GM10248 (cell line): ENCODE measurements at regions of chr4 and their contacts with region 1.

Region 1: DNA sequence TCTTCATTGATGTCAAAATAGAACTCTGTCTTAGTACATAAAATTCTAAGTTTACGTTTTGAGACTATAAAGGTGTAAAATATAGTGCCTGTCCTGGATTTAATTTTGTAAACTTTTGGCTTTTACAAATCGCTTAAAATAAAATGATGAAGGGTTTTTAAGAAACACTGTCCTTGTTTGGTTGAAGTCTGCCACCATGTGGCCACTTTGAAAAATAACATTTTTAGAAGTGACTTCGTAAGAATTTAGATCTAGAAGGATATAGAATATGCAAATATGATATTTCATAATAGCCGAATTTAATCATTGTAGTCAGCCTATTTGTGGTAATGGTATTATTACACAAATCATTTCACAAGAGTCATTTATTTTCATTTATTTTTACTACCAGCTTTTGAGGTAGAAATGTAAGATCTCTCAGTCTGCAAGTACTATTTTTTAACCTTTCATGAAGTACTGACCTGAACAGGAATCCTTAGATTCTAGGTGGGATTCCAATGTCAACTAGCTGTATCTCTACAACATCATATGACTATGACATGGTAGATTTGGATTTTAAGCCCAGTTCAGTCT is 31.0 kb upstream of the FAT4 start:
- DNase-seq: peak; percentile 24
- CTCF ChIP-seq: peak; percentile 36

Region 2: GRCh38 chr4:124334119-124334518 is 949.7 kb before region 1 on chr4:
- CTCF ChIA-PET with region 1: interaction called, 33 read pairs
- POLR2A ChIA-PET with region 1: no interaction called
- DNase-seq: no peak
- CTCF ChIP-seq: peak; percentile 39

Region 3: GRCh38 chr4:125266901-125267604 is 16.7 kb before region 1 on chr4:
- CTCF ChIA-PET with region 1: interaction called, 18 read pairs
- POLR2A ChIA-PET with region 1: no interaction called
- DNase-seq: no peak
- CTCF ChIP-seq: no peak

Region 4: DNA sequence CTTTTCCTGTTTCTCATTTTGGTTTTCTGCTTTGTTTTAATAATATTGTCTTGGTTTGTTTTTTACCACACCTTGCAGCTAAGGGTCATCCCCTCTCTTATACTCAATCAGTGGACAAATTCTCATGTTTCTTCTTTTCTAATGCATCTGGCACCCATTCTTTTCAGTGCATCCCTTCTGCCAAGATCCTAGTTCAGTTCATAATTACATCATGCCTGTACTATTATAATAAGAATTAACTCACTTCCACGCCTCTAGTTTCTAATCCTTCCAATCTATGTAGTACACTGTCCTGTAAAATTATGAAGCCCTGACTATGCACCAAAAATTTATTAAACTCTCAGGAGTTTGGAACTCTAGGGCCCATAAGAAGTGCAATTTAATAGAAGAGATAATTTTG is 157.0 kb after region 1 on chr4:
- CTCF ChIA-PET with region 1: no interaction called
- POLR2A ChIA-PET with region 1: no interaction called
- DNase-seq: no peak
- CTCF ChIP-seq: no peak